MCF 10A (cell line): ENCODE measurements at regions of chr5 and their contacts with region 1.

Region 1: DNA sequence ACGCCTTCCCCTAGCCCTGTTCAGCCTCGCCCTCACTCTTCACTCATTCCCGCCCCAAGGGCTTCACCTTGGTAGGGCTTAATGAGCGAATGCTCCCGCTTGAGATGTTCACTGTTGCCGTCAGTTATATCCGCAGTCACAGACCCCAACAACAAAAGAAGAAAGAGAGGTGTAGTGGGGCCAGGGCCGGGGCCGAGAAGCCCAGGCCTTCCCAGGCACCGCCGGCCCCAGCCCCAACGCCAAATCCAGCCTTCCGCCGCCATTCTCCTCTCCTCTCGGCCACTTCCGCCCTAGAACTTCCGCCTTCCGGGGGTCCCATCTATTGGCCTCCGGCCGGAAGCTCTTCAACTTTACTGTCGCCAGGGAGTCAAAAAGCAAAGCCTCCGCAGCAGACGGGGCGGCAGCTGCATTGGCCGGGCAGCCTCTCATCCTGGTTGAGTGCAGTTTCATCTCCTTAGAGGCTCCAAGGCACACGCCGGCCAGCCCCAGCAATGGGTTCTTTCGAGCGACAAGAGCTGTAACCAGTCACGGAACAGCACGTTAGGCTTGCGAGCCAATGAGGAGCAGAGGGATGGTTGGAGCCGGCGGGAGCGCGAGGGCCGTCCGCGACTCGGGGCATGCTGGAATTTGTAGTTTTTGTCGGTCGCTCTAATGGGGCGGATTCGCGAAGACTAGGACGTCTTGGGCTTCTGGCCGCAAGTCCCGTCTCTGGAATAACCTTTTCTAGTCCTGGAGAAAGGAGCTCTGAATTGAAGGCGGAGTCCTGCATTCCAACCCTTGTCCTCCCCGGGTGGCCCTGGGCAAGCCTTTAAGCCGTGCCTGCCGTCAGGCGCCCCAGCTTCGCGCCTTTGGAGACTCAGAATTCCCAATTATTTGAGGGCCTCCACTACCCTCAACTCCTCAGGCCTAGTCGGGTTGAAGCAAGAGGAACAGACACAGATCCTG is at the start of gene LMAN2:
- DNase-seq: peak; percentile 99
- H3K4me3 Mint-ChIP-seq: peak within 1 kb of the TSS; percentile 93
- H3K27ac Mint-ChIP-seq: peak within 1 kb of the TSS; percentile 98
- H3K4me1 Mint-ChIP-seq: peaks cover 24% of the 10 kb centered on the region
- H3K27me3 Mint-ChIP-seq: no peaks in the 10 kb centered on the region
- CTCF ChIP-seq: no peak
- total RNA-seq, gene LMAN2: 221 and 279 TPM in 2 replicates

Region 2: GRCh38 chr5:177303121-177303924 is 48.3 kb before region 1 on chr5 and contains the starts of genes PRELID1 and RAB24:
- CTCF ChIA-PET with region 1: interaction called, 3 read pairs
- POLR2A ChIA-PET with region 1: interaction called, 22 read pairs
- intact Hi-C with region 1: no loop called
- DNase-seq: peak; percentile 86
- H3K4me3 Mint-ChIP-seq: peak within 1 kb of the TSS; percentile 87
- H3K27ac Mint-ChIP-seq: peak within 1 kb of the TSS; percentile 73
- H3K4me1 Mint-ChIP-seq: peaks cover 57% of the 10 kb centered on the region
- H3K27me3 Mint-ChIP-seq: no peaks in the 10 kb centered on the region
- CTCF ChIP-seq: peak; percentile 59
- total RNA-seq, gene PRELID1: 217 and 267 TPM in 2 replicates
- total RNA-seq, gene RAB24: 34.3 and 42.6 TPM in 2 replicates

Region 3: DNA sequence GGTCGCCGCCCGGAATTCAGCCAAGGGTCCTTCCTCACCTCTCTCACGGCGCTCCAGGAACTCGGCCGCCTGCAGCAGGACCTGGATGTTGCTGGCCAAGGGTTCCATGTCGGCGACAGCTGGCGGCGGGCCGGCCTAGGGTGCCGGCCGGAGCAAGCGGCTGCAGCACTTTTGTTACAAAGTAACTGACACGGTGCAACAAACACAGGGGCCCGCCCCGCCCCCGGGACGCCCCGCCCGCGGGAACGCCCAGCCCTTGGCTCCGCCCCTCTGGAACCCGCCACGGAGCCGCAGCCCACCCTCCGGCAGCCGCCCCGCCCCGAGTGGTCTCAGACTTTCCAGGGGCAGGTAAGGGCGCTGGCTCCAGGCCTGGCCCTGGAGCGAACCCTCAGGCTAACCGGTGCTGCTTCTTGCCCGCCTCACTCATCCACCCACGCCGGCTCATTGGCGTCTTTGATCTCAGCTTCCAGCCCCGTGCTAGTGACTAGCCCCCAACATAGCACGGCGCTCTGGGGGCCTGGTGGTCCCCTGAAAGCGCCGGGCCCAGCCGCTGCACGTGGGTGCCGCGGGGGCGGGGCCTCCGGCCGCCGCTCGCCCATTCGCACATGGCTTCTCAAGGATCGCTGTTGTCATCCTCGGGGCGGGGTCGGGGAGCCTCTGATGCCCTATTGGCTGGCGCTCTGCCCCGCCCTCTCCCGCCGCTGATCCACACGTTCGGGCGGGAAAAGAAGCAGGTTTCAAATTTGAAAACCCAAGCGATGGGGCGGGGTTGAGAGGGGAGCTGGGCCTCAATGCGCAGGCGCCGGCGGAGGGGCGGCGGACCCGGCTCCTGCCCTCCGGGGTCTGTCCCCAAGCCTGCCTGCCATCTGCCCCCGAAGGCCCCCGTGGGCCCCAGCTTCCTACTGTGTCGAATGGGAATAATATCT is 39.7 kb before region 1 on chr5 and contains the start of gene MXD3:
- CTCF ChIA-PET with region 1: interaction called, 11 read pairs
- POLR2A ChIA-PET with region 1: interaction called, 11 read pairs
- intact Hi-C with region 1: no loop called
- DNase-seq: peak; percentile 99
- H3K4me3 Mint-ChIP-seq: peak within 1 kb of the TSS; percentile 66
- H3K27ac Mint-ChIP-seq: peak within 1 kb of the TSS; percentile 51
- H3K4me1 Mint-ChIP-seq: peaks cover 29% of the 10 kb centered on the region
- H3K27me3 Mint-ChIP-seq: no peaks in the 10 kb centered on the region
- CTCF ChIP-seq: no peak
- total RNA-seq, gene MXD3: 8.4 and 13.2 TPM in 2 replicates

Region 4: GRCh38 chr5:177327539-177328522 is 23.8 kb before region 1 on chr5:
- CTCF ChIA-PET with region 1: interaction called, 3 read pairs
- POLR2A ChIA-PET with region 1: interaction called, 12 read pairs
- intact Hi-C with region 1: no loop called
- DNase-seq: peak; percentile 34
- H3K4me3 Mint-ChIP-seq: no peak overlapping the region
- H3K27ac Mint-ChIP-seq: peak overlapping the region; percentile 68
- H3K4me1 Mint-ChIP-seq: peaks cover 20% of the 10 kb centered on the region
- H3K27me3 Mint-ChIP-seq: no peaks in the 10 kb centered on the region
- CTCF ChIP-seq: no peak

Region 5: GRCh38 chr5:177362610-177363507 is 11.2 kb after region 1 on chr5:
- CTCF ChIA-PET with region 1: interaction called, 9 read pairs
- POLR2A ChIA-PET with region 1: interaction called, 30 read pairs
- intact Hi-C with region 1: no loop called
- DNase-seq: peak; percentile 70
- H3K4me3 Mint-ChIP-seq: peak overlapping the region; percentile 79
- H3K27ac Mint-ChIP-seq: no peak overlapping the region
- H3K4me1 Mint-ChIP-seq: peaks cover 21% of the 10 kb centered on the region
- H3K27me3 Mint-ChIP-seq: no peaks in the 10 kb centered on the region
- CTCF ChIP-seq: no peak

Region 6: GRCh38 chr5:177370488-177371119 is 18.9 kb after region 1 on chr5:
- CTCF ChIA-PET with region 1: interaction called, 39 read pairs
- POLR2A ChIA-PET with region 1: interaction called, 58 read pairs
- intact Hi-C with region 1: no loop called
- DNase-seq: peak; percentile 96
- H3K4me3 Mint-ChIP-seq: peak overlapping the region; percentile 76
- H3K27ac Mint-ChIP-seq: no peak overlapping the region
- H3K4me1 Mint-ChIP-seq: peaks cover 24% of the 10 kb centered on the region
- H3K27me3 Mint-ChIP-seq: no peaks in the 10 kb centered on the region
- CTCF ChIP-seq: peak; percentile 60